Calu3 (cell line): ENCODE measurements at regions of chr14 and their contacts with region 1.

Region 1: GRCh38 chr14:58677996-58678395 is 40.2 kb downstream of the DACT1 start:
- DNase-seq: no peak
- H3K4me3 Mint-ChIP-seq: no peak overlapping the region
- H3K27ac Mint-ChIP-seq: no peak overlapping the region
- H3K4me1 Mint-ChIP-seq: no peaks in the 10 kb centered on the region
- H3K27me3 Mint-ChIP-seq: peaks cover 48% of the 10 kb centered on the region
- CTCF ChIP-seq: no peak

Region 2: DNA sequence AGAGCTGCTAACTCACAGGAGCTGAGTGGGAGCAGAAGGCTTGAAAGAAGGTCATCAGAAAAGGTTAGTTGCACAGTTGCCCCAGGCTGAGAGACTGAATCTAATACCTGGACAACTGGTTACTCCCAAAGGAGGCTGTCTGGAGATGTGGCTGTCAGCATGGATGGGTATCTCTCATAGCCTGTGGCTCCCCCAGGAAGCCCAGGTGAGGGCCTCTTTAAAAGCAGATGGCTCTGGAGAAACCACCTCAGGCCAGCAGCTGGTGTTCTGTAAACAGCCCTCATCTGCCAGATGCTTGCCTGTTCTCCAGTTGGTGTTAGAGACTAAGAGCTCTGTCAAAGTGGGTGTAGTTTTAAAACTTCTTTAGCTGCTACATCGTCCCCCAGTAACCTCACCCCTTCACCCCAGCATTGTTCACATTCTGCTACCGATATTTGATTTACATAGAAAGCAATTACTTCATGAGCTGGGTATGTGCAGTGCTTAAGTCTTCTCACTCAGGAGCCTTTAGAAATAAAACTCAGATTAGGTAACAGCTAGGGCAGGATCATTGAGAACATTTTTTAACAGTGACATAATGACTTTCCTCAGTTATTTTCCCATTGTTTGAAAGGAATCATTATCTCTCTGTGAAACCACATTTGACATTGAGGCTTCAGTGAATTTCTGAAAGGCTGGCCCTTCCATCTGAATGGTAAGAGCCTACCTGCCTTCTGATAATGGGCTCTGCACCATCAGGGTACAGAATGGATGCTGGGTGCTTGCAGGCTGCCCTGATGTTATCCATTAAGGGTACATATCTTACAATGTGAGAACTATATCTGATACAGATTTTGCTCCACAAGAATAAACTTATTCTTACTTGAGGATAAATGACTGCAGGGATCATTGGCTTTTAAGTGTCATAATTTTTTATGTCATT is 14.2 kb before region 1 on chr14:
- CTCF ChIA-PET with region 1: no interaction called
- intact Hi-C with region 1: no loop called
- DNase-seq: no peak
- H3K4me3 Mint-ChIP-seq: no peak overlapping the region
- H3K27ac Mint-ChIP-seq: no peak overlapping the region
- H3K4me1 Mint-ChIP-seq: no peaks in the 10 kb centered on the region
- H3K27me3 Mint-ChIP-seq: peaks cover 8% of the 10 kb centered on the region
- CTCF ChIP-seq: no peak

Region 3: DNA sequence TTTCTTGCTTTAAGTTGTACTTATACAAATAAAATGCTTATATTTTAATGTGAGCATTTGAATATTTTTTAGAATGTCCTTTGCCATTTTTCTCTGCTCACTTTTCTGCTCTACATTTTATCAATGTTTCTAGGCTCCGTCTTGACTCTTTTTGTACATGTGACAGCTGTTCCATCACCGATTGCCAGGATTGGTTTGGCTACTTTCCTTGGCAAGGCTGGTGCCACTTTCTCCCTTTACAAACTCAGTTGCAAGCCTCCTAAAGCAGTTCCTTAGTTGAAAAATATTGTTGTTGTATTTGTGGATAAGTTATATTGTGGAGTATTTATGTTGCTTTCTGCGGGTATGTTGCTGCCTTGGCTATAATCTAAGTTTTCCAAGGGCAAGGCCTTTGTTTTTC is 23.2 kb after region 1 on chr14:
- CTCF ChIA-PET with region 1: interaction called, 10 read pairs
- intact Hi-C with region 1: no loop called
- DNase-seq: no peak
- H3K4me3 Mint-ChIP-seq: no peak overlapping the region
- H3K27ac Mint-ChIP-seq: no peak overlapping the region
- H3K4me1 Mint-ChIP-seq: no peaks in the 10 kb centered on the region
- H3K27me3 Mint-ChIP-seq: peaks cover 58% of the 10 kb centered on the region
- CTCF ChIP-seq: no peak

Region 4: GRCh38 chr14:58749066-58749669 is 71.2 kb after region 1 on chr14:
- CTCF ChIA-PET with region 1: no interaction called
- intact Hi-C with region 1: no loop called
- DNase-seq: peak; percentile 25
- H3K4me3 Mint-ChIP-seq: no peak overlapping the region
- H3K27ac Mint-ChIP-seq: no peak overlapping the region
- H3K4me1 Mint-ChIP-seq: peaks cover 54% of the 10 kb centered on the region
- H3K27me3 Mint-ChIP-seq: peaks cover 14% of the 10 kb centered on the region
- CTCF ChIP-seq: no peak